PC-3 (cell line): ENCODE measurements at regions of chr6 and their contacts with region 1.

Region 1: DNA sequence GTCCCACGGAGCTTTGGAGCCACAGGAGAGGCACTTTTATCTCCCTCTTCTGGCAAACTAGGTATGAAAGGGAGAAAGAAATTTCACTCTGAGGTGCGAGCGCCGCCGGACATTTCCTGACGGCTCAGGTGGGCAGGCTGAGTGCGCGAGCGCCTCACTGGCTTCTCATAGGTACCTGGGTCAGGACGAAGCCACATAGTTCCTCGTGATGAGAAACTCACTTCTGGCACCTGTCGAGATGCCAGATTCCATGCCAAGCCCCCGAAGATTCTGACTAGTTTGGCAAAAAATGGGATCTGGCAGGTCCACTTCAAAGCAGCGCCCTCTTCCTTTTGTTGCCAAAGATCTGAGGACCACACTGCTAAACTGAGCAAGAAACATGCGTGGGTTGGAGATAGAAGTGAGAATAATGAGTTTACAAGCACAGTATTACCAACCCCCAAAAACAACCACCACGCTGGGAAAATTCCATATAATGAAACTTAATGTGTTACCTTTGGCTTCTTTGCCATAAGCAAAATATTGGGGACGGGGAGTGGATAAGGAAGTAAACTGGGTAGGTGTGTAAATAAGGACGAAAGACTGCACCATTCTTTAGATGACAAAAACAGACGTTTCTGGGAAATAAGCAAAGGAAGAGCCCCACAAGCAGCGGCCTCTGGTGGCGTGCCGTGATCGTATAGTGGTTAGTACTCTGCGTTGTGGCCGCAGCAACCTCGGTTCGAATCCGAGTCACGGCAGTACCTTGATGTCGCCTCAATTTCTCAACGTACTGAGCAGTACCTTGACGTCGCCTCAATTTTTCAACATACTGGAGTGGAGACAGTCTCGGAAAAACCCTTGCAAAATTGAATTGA is 89.8 kb upstream of the PRSS16 start:
- DNase-seq: peak; percentile 87
- ATAC-seq: peak; percentile 75
- H3K4me3 ChIP-seq: peak overlapping the region; percentile 81
- H3K27ac ChIP-seq: no peak overlapping the region
- H3K4me1 ChIP-seq: peaks cover 10% of the 10 kb centered on the region
- H3K27me3 ChIP-seq: no peaks in the 10 kb centered on the region
- CTCF ChIP-seq: peak; percentile 47; the same call in 1 of the 2 replicates

Region 2: GRCh38 chr6:25652007-25652515 is 1505.6 kb before region 1 on chr6 and contains the start of gene SCGN:
- CTCF ChIA-PET with region 1: no interaction called
- POLR2A ChIA-PET with region 1: no interaction called
- intact Hi-C with region 1: no loop called
- DNase-seq: peak; percentile 58
- ATAC-seq: peak; percentile 71
- H3K4me3 ChIP-seq: no peak within 1 kb of the TSS
- H3K27ac ChIP-seq: no peak within 1 kb of the TSS
- H3K4me1 ChIP-seq: no peaks in the 10 kb centered on the region
- H3K27me3 ChIP-seq: peaks cover 67% of the 10 kb centered on the region
- CTCF ChIP-seq: no peak
- total RNA-seq, gene SCGN: not detected in 2 replicates

Region 3: GRCh38 chr6:26329763-26330511 is 827.8 kb before region 1 on chr6:
- CTCF ChIA-PET with region 1: no interaction called
- POLR2A ChIA-PET with region 1: no interaction called
- intact Hi-C with region 1: loop called (anchors 5 kb)
- DNase-seq: peak; percentile 83
- ATAC-seq: peak; percentile 44
- H3K4me3 ChIP-seq: peak overlapping the region; percentile 86
- H3K27ac ChIP-seq: no peak overlapping the region
- H3K4me1 ChIP-seq: peaks cover 16% of the 10 kb centered on the region; the same call in 1 of the 2 replicates
- H3K27me3 ChIP-seq: no peaks in the 10 kb centered on the region
- CTCF ChIP-seq: no peak

Region 4: GRCh38 chr6:27126815-27127537 is 30.7 kb before region 1 on chr6:
- CTCF ChIA-PET with region 1: interaction called, 5 read pairs
- POLR2A ChIA-PET with region 1: no interaction called
- intact Hi-C with region 1: loop called (anchors 1 kb)
- DNase-seq: peak; percentile 95
- ATAC-seq: peak; percentile 83
- H3K4me3 ChIP-seq: peak overlapping the region; percentile 59
- H3K27ac ChIP-seq: no peak overlapping the region
- H3K4me1 ChIP-seq: peaks cover 30% of the 10 kb centered on the region
- H3K27me3 ChIP-seq: no peaks in the 10 kb centered on the region
- CTCF ChIP-seq: peak; percentile 92

Region 5: DNA sequence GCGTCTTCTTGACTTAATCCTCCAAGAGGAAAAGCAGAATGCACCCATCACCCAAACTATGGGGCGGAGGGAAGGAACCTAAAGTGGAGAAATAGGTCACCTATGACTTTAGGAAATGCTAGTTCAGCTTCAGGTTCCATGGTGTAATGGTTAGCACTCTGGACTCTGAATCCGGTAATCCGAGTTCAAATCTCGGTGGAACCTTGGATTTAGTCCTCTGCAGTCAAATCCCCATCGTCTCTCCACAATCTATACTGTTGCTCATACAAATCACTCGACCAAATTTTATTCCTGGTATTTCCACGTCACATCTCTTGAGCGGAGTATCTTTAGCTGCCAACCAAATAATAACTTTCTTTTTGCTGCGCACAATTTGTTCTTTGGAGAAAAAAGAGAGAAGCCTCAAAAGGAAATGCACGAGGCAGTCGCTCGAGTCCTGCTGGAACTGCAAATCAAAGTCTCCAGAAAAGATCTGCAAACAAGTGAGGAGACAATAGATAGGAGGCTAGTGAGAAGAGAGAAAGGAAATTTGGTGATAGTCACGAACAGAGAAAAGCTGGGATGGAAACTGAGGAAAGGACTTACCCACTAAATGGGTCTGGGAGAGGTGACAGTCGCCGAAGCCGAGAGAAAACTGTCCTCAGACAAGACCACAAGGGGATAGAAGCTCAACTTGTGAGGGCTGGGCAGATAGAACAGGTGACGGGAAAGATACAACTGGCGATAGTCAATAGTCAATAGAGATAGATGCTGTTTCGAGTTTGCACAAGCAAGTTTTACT is 137.8 kb after region 1 on chr6:
- CTCF ChIA-PET with region 1: no interaction called
- POLR2A ChIA-PET with region 1: no interaction called
- intact Hi-C with region 1: loop called (anchors 5 kb)
- DNase-seq: peak; percentile 88
- ATAC-seq: peak; percentile 55
- H3K4me3 ChIP-seq: peak overlapping the region; percentile 76
- H3K27ac ChIP-seq: no peak overlapping the region
- H3K4me1 ChIP-seq: peaks cover 16% of the 10 kb centered on the region
- H3K27me3 ChIP-seq: no peaks in the 10 kb centered on the region
- CTCF ChIP-seq: no peak